ENCODE measurements at regions of chr19 and their contacts with region 1.

Region 1: GRCh38 chr19:940591-941291 is 14.9 kb downstream of the ARID3A start:
- DNase-seq: peak; percentile 77
- ATAC-seq: peak; percentile 74
- H3K4me3 Mint-ChIP-seq: peak overlapping the region; percentile 73
- H3K27ac Mint-ChIP-seq: no peak overlapping the region
- H3K4me1 Mint-ChIP-seq: peaks cover 26% of the 10 kb centered on the region
- H3K27me3 Mint-ChIP-seq: no peaks in the 10 kb centered on the region

Region 2: GRCh38 chr19:956766-957441 is 16.2 kb after region 1 on chr19:
- CTCF ChIA-PET with region 1: interaction called, 5 read pairs
- POLR2A ChIA-PET with region 1: interaction called, 6 read pairs
- intact Hi-C with region 1: loop called in 1 of 2 experiments (anchors 2 kb)
- DNase-seq: no peak
- ATAC-seq: no peak
- H3K4me3 Mint-ChIP-seq: no peak overlapping the region
- H3K27ac Mint-ChIP-seq: no peak overlapping the region
- H3K4me1 Mint-ChIP-seq: peaks cover 4% of the 10 kb centered on the region
- H3K27me3 Mint-ChIP-seq: no peaks in the 10 kb centered on the region